ENCODE measurements at regions of chr6 and their contacts with region 1.

Region 1: DNA sequence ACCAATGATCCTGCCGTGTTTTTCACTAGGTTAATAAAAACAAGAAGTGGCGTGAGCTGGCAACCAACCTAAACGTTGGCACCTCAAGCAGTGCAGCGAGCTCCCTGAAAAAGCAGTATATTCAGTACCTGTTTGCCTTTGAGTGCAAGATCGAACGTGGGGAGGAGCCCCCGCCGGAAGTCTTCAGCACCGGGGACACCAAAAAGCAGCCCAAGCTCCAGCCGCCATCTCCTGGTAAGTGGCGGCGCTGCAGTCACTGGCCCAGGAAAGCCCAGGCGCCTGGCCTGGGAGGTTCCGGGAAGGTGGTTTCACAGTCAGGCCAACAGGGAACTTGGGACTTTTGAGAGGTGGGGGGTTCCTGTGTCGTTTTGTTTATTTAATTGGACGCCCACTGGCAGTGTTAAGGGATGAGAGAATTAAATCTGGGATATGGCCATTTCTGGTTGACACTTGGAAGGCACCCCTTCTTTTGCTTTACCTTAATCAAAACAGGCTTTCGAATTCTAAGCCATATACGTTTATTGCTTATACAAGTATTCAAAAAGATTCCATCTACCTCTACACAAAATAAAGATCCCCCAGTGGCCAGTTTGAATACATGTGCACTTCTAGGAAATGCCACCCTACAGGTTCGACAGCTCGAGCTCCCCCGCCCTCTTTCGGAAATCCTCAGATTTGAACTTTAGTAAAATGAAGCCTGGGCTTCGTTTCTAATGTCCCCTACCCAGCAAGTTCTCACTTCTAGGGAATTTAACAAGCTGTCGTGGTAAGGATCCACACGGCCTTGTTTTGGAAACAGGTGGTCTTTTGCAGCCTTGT is 138.9 kb downstream of the TMEM242 start:
- DNase-seq: peak in 1 of 2 donors; percentile 89
- H3K4me3 ChIP-seq: peak overlapping the region; percentile 7 to 30
- H3K27ac ChIP-seq: peak overlapping the region in 1 of 2 donors; percentile 35
- H3K4me1 ChIP-seq: peaks cover 0 to 20% of the 10 kb centered on the region in 2 donors
- H3K27me3 ChIP-seq: no peaks in the 10 kb centered on the region
- CTCF ChIP-seq: peak; percentile 89 to 99 (median 96)

Region 2: GRCh38 chr6:156564127-156564806 is 620.1 kb before region 1 on chr6:
- intact Hi-C with region 1: loop called (anchors 1 kb)
- DNase-seq: peak; percentile 30 to 83
- H3K4me3 ChIP-seq: no peak overlapping the region
- H3K27ac ChIP-seq: no peak overlapping the region
- H3K4me1 ChIP-seq: peaks cover 0 to 4% of the 10 kb centered on the region in 2 donors
- H3K27me3 ChIP-seq: no peaks in the 10 kb centered on the region
- CTCF ChIP-seq: peak; percentile 84 to 96 (median 94)

Region 3: DNA sequence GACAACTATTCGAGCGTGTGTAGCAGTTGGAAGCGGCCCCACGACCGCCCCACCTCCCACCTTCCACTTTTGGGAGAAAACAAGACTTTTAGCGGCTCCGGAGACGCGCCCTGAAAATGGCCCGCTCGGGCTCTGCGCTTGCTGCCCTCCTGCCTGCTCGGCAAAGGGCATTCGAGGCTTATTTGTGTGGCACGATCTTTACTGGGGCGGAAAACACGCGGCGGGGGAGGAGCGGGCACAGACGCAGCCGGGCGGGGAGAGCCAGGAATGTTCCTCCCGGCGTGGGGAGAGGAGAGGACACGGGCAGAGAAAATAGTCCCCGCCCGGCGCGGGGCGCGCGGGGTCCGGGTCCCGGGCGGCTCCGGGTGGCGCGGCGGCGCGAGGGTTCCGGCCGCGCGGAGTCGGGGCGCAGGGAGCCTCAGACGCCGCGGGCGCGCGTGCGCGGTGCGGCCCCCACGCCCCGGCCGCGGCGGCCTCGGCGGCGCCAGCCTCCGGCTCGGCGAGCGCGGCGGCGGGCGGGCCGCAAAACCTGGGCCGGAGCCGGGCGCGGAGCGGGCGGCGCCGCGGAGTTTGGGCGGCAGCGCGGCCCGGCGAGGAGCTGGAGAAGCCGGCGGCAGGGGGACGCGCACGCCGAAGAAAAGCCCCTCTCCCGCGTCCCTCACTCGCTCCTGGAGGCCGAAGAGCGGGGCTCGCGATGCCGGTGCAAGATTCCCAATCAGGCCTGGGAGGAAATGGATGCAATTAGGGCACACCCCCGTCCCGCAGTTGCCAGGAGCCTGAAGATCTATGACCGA is 497.2 kb before region 1 on chr6:
- intact Hi-C with region 1: loop called (anchors 10 kb)
- DNase-seq: peak; percentile 77 to 97
- H3K4me3 ChIP-seq: peak overlapping the region; percentile 71 to 93
- H3K27ac ChIP-seq: peak overlapping the region; percentile 97
- H3K4me1 ChIP-seq: peaks cover 0 to 6% of the 10 kb centered on the region in 2 donors
- H3K27me3 ChIP-seq: no peaks in the 10 kb centered on the region
- CTCF ChIP-seq: no peak

Region 4: DNA sequence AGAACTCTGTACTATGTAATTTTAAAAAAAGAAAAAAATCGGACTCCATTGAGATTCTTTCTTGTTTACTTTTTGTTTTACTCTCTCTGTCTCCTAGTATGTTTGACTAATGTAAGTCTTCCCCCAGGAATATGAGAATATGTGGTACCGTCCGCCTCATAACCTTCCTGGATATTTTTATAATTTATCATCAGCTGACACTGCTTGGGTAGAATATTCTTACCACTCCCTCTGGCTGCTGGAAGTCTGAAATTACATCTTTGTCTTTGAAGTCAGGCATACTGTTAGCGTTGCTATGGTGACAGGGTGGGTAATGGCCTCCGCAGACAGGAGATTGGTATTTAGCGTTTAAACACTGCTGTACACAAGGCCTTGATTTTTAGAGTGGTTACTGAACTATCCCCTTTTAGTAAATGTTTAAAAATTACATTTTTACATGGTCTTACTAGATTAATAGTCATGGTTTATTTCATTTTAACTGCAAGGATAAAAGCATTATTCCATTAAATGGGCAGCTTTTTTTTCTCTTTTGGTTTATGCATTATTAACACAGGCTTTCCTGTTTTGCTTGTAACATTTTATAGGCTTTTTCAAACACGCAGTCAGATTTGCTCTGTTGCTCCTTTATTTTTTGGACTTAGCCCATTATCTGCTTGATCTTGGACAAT is 230.8 kb before region 1 on chr6:
- intact Hi-C with region 1: loop called (anchors 10 kb)
- DNase-seq: no peak
- H3K4me3 ChIP-seq: no peak overlapping the region
- H3K27ac ChIP-seq: no peak overlapping the region
- H3K4me1 ChIP-seq: peaks cover 5 to 32% of the 10 kb centered on the region in 2 donors
- H3K27me3 ChIP-seq: no peaks in the 10 kb centered on the region
- CTCF ChIP-seq: peak in 2 of 3 experiments; percentile 17 to 37

Region 5: DNA sequence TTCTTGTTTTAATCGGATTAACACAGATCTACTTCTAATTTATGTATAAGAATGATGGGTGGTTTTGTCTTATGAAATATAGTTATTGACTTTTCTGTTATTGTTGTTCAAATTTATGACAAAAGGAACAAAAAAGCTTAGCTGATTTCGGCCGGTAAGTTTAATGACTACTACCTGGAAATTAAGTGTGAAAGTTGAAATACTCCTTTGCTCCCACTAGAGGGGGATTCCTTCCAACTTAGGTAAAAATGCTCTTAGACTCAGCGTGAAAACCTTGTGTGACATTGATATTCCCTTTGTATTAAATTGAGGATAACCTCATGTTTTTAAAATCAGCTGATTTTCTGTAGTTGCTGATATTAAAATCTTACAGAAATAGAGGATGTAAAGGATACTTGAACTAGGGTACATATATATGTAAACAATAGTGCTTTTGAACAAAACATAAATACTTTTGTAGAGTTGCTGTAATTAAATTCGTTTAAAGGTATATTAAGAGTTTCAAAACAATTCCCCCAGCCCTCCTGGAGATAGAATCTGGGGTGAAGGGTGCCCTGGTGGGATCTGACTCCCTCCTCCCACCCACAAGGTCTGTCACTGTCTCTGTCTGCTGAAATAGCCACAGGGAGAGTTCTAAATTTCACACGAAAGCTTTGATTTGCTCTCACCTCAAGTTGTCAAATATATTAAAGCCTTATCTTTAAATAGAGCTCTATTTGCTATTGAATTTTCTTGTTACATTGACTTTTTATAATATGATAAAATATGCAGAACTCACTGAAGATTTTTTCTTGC is 149.8 kb before region 1 on chr6:
- intact Hi-C with region 1: loop called (anchors 2 kb)
- DNase-seq: no peak
- H3K4me3 ChIP-seq: no peak overlapping the region
- H3K27ac ChIP-seq: no peak overlapping the region
- H3K4me1 ChIP-seq: peaks cover 4 to 39% of the 10 kb centered on the region in 2 donors
- H3K27me3 ChIP-seq: no peaks in the 10 kb centered on the region
- CTCF ChIP-seq: peak; percentile 54 to 62 (median 61)

Region 6: DNA sequence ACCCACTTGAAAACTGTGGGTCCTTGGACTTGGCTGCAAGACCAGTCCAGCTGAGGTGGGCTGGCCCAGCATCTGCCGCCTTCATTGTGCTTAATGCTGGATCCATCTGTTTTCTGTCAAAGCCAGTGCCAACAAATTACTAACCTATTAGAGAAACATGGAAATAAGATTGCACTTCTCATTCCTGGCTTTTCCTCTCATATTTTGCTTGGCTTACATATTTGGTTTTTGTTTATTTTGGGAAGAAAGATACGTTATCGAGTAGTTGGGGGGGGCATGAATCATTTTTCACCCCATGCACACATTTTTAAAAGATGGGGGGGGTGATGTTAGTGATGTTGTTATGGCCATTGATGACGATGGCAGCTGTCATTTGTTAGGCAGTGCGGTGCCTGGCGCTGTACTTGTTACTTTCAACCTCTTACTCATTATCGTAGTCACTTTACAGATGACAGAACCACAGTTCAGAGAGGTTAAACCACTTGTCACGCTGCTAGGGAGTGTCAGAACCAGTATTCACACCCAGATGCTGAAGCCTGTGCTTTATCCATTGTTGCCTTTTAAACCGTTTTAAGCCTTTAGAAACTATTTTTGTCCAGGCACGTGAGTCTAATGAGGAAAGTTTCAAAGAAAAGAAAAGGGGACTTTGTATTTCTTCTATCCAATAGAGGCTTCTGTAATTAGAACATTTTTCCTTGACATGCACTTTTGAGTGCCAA is 41.1 kb before region 1 on chr6:
- intact Hi-C with region 1: loop called (anchors 2 kb)
- DNase-seq: peak in 1 of 2 donors; percentile 86
- H3K4me3 ChIP-seq: peak overlapping the region; percentile 4 to 36
- H3K27ac ChIP-seq: peak overlapping the region; percentile 67 to 78
- H3K4me1 ChIP-seq: peaks cover 13 to 38% of the 10 kb centered on the region in 2 donors
- H3K27me3 ChIP-seq: no peaks in the 10 kb centered on the region
- CTCF ChIP-seq: no peak

Region 7: GRCh38 chr6:157198419-157199279 is 14.2 kb after region 1 on chr6:
- intact Hi-C with region 1: loop called (anchors 1 kb)
- DNase-seq: peak; percentile 67 to 93
- H3K4me3 ChIP-seq: peak overlapping the region; percentile 36 to 51
- H3K27ac ChIP-seq: peak overlapping the region; percentile 78 to 89
- H3K4me1 ChIP-seq: peaks cover 3 to 9% of the 10 kb centered on the region in 2 donors
- H3K27me3 ChIP-seq: no peaks in the 10 kb centered on the region
- CTCF ChIP-seq: no peak

Region 8: GRCh38 chr6:158793432-158793831 is 1609.0 kb after region 1 on chr6:
- intact Hi-C with region 1: no loop called
- DNase-seq: no peak
- H3K4me3 ChIP-seq: no peak overlapping the region
- H3K27ac ChIP-seq: no peak overlapping the region
- H3K4me1 ChIP-seq: peaks cover 0 to 6% of the 10 kb centered on the region in 2 donors
- H3K27me3 ChIP-seq: no peaks in the 10 kb centered on the region
- CTCF ChIP-seq: peak in 2 of 3 experiments; percentile 5 to 22

Measured in ascending aorta (tissue), 2 donors.